ENCODE measurements at regions of chr1 and their contacts with region 1.

Region 1: GRCh38 chr1:99180343-99180808 is 83.9 kb upstream of the PLPPR4 start:
- DNase-seq: peak; percentile 72
- H3K4me3 ChIP-seq: no peak overlapping the region
- H3K27ac ChIP-seq: peak overlapping the region in 2 of 4 donors; percentile 6 to 36
- H3K4me1 ChIP-seq: peaks cover 0 to 17% (median 4%) of the 10 kb centered on the region in 4 donors
- H3K27me3 ChIP-seq: no peaks in the 10 kb centered on the region
- CTCF ChIP-seq: peak in 3 of 4 experiments; percentile 61 to 74 (median 70)
- EP300 ChIP-seq: no peak
- POLR2A ChIP-seq: no peak

Region 2: GRCh38 chr1:99069146-99069545 is 111.2 kb before region 1 on chr1:
- intact Hi-C with region 1: no loop called
- DNase-seq: no peak
- H3K4me3 ChIP-seq: no peak overlapping the region
- H3K27ac ChIP-seq: no peak overlapping the region
- H3K4me1 ChIP-seq: no peaks in the 10 kb centered on the region
- H3K27me3 ChIP-seq: no peaks in the 10 kb centered on the region
- CTCF ChIP-seq: no peak
- EP300 ChIP-seq: no peak
- POLR2A ChIP-seq: no peak

Region 3: DNA sequence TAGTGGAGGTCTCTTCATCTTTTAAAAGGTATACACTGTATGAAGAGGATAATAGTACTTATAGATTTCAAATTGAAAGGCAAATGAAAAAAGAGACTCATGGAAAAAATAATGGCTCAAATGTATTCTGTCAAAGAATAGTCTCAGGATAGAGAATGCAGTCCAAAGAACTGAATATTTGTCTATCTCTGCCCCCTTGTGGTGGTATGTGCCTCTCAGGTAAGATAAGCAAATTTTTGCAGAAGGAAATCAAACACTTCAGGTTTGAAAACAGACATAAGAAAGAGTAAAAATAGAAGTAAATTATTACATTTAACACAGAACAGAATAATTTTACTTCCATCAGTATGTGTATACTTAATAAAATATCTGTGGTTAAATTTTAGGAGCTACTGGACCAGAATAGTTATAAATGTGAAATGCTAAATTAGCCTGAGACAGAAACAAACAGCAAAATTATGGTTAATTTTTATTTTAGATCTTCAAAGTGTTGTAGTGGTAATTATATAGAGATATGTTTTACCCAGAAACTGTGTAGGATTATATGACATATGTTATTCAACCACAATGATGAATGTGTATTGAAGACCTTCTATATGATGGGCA is 301.1 kb after region 1 on chr1:
- intact Hi-C with region 1: loop called (anchors 2 kb)
- DNase-seq: no peak
- H3K4me3 ChIP-seq: no peak overlapping the region
- H3K27ac ChIP-seq: no peak overlapping the region
- H3K4me1 ChIP-seq: no peaks in the 10 kb centered on the region
- H3K27me3 ChIP-seq: no peaks in the 10 kb centered on the region
- CTCF ChIP-seq: peak in 3 of 4 experiments; percentile 53 to 65 (median 61)
- EP300 ChIP-seq: no peak
- POLR2A ChIP-seq: no peak